IMR-90 (cell line): ENCODE measurements at regions of chr6 and their contacts with region 1.

Region 1: GRCh38 chr6:113190167-113190566 is 667.0 kb upstream of the MARCKS start:
- DNase-seq: no peak
- ATAC-seq: no peak
- H3K4me3 ChIP-seq: no peak overlapping the region
- H3K27ac ChIP-seq: no peak overlapping the region
- H3K4me1 ChIP-seq: peaks cover 1% of the 10 kb centered on the region; the same call in 1 of the 2 replicates
- H3K27me3 ChIP-seq: no peaks in the 10 kb centered on the region
- CTCF ChIP-seq: no peak
- POLR2A ChIP-seq: no peak
- RAD21 ChIP-seq: no peak

Region 2: DNA sequence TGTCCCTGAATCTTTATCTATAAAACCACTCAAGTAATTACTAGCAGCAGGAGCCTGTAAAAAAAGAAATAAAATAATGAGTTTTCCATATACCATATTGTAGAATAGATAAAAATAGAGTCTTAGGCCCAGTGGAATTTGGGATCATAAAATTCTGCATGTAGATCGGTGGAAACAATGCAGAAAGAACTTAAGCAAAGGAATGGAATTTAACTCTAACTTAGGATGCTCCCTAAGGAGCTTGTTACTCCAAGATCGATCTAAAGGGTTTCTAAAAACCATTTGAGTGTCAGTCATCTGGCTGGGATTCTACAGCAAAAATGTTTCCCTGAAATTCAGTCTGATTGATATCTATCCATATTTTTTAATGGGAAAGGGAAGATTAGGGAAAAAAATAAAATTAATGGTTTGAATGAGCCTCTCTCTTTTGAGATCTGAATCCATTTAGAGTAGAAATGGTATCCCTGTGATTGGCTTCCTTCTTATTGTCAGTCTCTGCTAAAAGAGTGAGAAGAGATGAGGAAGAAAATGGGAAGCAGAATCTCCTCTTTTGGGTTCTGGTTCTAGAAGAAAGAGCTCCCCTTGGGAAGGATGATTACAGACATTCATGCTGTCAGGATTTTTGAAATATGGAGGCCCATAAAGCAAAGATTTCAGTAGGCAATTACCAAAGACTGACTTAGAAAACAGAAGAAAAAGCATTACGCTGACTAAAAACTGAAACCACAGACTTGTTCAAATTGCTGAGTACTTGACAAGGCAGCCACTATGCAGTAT is 102.7 kb after region 1 on chr6:
- CTCF ChIA-PET with region 1: no interaction called
- POLR2A ChIA-PET with region 1: no interaction called
- dilution Hi-C with region 1: no loop called
- in situ Hi-C with region 1: no loop called
- intact Hi-C with region 1: loop called (anchors 5 kb)
- DNase-seq: no peak
- ATAC-seq: no peak
- H3K4me3 ChIP-seq: no peak overlapping the region
- H3K27ac ChIP-seq: no peak overlapping the region
- H3K4me1 ChIP-seq: no peaks in the 10 kb centered on the region
- H3K27me3 ChIP-seq: no peaks in the 10 kb centered on the region
- CTCF ChIP-seq: no peak
- POLR2A ChIP-seq: no peak
- RAD21 ChIP-seq: no peak